Cardiac septum (tissue), 1 donor: ENCODE measurements at regions of chr11 and their contacts with region 1.

Region 1: DNA sequence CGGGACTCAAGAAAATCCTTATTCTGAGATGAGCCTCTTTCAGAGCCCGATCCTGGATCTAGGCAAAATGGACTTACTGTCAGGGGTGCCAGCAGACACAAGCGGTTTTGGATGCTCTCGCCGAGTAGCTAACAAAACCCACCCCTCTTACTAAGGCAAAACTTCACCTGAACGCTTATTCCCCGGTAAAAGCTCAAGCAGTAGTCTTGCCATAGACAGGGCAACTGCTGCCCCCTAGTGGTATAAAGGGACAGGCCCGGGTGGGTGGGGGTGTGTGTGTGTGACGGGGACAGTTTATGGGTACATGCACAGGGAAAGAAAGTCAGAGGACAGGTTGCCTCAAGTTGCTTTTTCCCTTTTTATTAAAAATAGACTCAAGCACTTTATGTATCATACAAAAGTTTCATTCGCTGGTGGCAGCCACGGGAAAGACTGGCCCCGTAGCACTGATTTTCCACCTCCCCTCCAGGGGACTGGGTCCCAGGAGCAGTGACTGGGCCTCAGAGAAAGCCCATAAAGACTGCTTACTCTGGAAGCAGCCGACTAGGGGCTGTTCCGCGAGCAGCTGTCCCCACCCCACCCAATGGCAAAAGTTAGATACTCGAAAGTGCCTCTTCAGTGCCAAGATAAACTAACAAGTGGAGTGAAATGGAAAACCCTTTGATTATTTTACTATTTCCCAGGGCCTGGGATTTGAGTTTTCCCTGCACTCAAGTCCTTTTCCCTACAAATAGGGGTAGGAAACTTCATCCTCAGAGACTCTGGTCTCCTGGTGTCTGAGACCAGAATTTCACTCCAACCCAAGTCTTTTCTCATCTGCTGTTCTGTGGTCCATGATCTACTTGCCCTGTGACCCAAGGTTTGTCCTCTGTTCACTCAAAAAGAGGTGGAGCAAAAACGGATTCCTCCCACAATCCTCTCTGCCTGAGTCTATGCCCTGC is 4.7 kb downstream of the YPEL4 start:
- DNase-seq: peak; percentile 88

Region 2: GRCh38 chr11:57499413-57499982 is 145.5 kb before region 1 on chr11:
- intact Hi-C with region 1: loop called (anchors 10 kb)
- DNase-seq: peak; percentile 99

Region 3: DNA sequence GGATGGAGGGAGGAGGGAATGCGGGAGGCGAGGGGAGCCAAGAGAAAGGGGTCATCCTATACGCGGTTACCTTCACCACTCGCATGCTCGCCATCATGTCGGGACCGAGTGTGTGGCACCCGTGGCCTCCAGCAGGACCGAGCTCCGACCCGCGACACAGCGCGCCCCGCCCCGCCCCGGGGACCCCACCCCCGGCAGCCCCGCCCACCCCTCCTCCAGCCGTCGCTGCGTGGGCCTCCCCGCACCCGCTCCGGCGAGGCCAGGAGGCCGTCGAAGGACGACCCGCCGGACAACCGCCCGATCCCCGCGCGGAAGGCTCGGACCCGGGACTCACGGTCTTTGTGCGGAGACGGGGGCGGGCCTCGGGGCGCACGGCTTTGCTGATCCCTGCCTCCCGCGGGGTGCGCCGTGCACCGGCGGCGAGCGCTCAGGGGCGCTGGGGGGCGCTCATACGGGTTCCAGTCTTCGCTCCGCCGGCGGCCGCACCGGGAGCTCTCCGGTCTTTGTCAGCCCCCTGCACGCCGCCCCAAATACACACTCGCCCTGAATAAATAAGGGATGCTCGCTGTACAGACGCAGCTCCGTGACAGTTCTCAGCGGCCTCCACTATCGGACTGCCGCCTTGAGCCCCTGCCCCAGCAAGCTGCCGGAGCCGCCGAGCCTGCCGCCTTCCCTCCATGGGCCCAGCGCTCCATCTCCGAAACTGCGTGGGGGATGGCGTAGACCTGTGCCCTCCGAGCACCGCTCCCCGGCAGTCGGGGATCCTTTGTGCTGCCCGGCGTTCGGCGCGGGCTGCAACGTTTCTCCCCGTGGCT is 77.3 kb before region 1 on chr11 and contains the start of gene UBE2L6:
- intact Hi-C with region 1: loop called (anchors 1 kb)
- DNase-seq: peak; percentile 89
- total RNA-seq, gene UBE2L6: 15.8 TPM

Region 4: GRCh38 chr11:57604296-57605027 is 40.6 kb before region 1 on chr11:
- intact Hi-C with region 1: no loop called
- DNase-seq: no peak